T-cell (primary cell): ENCODE measurements at regions of chr20 and their contacts with region 1.

Region 1: DNA sequence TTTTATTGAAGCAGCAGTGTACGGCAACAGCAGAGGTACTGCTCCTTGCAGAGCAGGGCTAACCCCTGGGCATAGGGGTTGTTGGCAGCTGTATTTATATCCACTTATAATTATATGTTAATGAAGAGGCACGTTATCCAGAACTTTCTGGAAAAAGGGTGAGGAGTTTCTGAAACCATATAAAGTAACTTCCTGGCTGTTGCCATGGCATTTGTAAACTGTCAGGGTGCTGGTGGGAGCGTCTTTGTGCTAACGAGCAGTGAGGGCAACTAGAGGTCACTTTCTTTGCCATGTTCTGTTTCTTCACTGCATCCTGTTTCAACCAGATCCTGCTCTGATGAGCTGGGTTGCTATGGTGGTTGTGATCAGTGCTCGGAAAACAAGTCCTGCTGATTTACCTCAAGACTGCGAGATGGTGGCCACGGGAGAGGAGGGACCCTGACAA is 11.1 kb upstream of the ARFGEF2 start:
- DNase-seq: peak in 27 of 35 experiments; percentile 5 to 69 (median 26)
- ATAC-seq: peak in 3 of 4 experiments; percentile 34 to 86 (median 48)
- H3K4me3 ChIP-seq: no peak overlapping the region
- H3K4me3 Mint-ChIP-seq: no peak overlapping the region
- H3K27ac ChIP-seq: peak overlapping the region; percentile 58
- H3K27ac Mint-ChIP-seq: peak overlapping the region in 1 of 2 donors; percentile 36
- H3K4me1 ChIP-seq: peaks cover 0 to 23% of the 10 kb centered on the region in 2 experiments
- H3K4me1 Mint-ChIP-seq: peaks cover 0 to 19% (median 6%) of the 10 kb centered on the region in 3 donors
- H3K27me3 ChIP-seq: peaks cover 0 to 7% of the 10 kb centered on the region in 2 experiments
- H3K27me3 Mint-ChIP-seq: peaks cover 0 to 4% of the 10 kb centered on the region in 2 donors

Region 2: DNA sequence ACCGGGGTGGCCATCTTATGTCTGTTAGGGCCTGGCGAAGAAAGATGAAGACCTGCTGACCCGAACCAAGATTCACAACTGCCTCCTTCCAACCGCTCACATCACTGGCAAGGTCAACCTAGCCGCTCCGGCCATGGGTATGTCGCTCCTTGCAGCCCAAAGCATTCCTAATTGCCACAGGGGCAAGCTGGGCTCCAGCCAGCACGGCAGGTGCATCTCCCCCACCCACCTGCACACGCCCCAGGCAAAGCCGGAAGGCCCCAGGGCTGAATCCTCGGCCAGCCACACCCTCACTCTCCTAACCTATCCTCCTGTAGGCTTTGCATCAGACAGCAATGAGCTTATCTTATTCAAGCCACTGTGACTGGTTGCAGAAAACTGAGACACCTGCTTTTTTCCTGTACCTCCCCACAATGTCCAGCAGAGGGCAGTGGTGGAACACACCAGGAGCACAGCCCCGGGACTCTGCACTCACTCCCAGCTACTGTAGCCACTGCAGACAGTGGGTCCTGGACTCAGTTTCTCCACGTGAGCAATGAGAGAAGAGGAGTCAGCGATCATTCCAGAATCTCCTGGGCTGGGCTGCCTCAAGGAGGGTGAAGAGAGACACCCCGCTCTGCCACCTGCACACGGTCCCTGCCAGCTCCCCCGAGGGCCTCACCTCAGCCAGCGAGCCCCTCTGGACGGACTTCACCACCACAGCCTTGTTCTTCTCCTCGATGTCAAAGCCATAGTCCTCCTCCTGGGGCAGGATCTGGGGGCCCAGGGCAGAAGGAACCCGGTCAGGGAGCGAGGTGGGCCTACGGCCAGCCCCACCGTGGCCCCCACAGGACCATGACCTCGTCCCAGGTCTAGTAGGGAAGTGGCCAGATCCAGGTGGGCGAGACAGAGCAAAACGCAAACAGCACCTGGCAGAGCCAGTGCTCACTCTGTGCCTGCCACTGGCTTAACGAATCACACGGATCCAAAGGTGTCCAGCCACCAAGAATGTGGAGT is 252.6 kb before region 1 on chr20:
- CTCF ChIA-PET with region 1: interaction called, 23 to 79 read pairs
- POLR2A ChIA-PET with region 1: no interaction called
- DNase-seq: peak; percentile 24 to 87 (median 55)
- ATAC-seq: peak; percentile 76 to 82 (median 78)
- H3K4me3 ChIP-seq: no peak overlapping the region
- H3K4me3 Mint-ChIP-seq: no peak overlapping the region
- H3K27ac ChIP-seq: no peak overlapping the region
- H3K27ac Mint-ChIP-seq: peak overlapping the region in 1 of 2 donors; percentile 15
- H3K4me1 ChIP-seq: peaks cover 0 to 7% of the 10 kb centered on the region in 2 experiments
- H3K4me1 Mint-ChIP-seq: peaks cover 3 to 19% (median 6%) of the 10 kb centered on the region in 3 donors
- H3K27me3 ChIP-seq: no peaks in the 10 kb centered on the region
- H3K27me3 Mint-ChIP-seq: no peaks in the 10 kb centered on the region